Activated CD4-positive, alpha-beta memory T cell treated with anti-CD3 and anti-CD28 coated beads for 36 hours (primary cell): ENCODE measurements at regions of chr22 and their contacts with region 1.

Region 1: DNA sequence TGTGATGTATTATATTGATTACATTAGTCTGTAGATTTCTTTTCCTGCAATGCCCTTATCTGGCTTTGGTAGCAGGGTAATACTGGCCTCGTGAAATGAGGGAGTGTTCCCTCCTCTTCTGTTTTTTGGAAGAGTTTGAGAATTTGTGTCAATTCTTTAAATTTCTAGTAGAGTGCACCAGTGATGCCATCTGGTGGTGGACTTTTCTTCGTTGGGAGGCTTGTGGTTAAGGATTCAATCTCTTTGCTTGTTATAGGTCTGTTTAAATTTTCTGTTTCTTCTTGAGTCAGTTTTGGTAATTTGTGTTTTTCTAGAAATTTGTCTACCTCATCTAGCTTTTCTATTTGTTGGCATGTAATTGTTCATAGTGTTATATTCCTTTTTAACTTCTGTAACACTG is 18.9 kb downstream of the SHANK3 start:
- DNase-seq: peak; percentile 65
- H3K4me3 Mint-ChIP-seq: no peak overlapping the region
- H3K27ac Mint-ChIP-seq: no peak overlapping the region
- H3K4me1 Mint-ChIP-seq: peaks cover 7% of the 10 kb centered on the region
- H3K27me3 Mint-ChIP-seq: peaks cover 2% of the 10 kb centered on the region

Region 2: GRCh38 chr22:50576070-50576469 is 115.5 kb before region 1 on chr22:
- CTCF ChIA-PET with region 1: no interaction called
- POLR2A ChIA-PET with region 1: no interaction called
- intact Hi-C with region 1: loop called (anchors 1 kb)
- DNase-seq: peak; percentile 21
- H3K4me3 Mint-ChIP-seq: no peak overlapping the region
- H3K27ac Mint-ChIP-seq: no peak overlapping the region
- H3K4me1 Mint-ChIP-seq: peaks cover 13% of the 10 kb centered on the region
- H3K27me3 Mint-ChIP-seq: no peaks in the 10 kb centered on the region

Region 3: DNA sequence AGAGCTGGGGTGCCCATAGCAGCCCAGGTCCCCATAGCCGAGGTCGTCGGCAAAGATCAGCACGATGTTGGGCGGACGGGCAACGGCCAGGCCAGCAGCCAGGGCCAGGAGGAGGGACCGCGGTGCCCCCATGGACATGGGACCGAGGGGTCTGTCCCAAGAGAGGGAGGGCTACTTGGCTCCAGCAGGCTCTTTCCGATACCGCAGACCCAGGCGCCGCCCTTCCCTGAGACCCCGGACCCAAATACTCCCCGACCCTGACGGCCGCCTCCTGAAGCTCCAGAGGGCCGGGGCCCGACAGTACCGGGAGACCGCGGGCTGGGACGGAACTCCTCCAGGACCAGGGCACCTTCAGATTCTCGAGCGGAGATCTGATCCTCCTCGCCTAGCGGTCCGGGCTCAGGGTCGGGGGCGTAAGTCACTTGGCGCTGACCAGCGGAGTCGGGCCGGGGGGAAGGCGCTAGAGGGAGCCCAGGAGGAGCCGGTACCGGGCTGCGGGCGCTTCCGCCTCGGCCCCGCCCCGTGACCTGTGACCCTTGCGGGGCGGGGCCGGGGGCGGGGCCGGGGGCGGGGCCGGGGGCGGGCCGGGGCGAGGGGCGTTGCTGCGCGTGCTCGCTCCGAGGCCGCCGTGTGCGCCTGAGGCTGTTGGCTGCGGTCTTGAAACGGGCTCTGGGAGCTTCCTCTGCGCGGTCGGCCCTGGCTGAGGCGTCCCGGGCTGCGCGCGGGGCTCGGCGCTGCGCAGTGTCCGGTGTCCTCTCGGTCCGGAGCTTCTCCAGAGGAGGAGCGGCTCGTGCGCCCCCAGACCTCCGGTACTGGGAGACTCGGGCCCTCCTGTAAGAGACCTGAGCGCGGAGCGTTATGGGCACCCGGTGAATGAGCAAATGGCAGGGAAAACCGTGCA is 63.6 kb before region 1 on chr22 and contains the start of gene ARSA:
- CTCF ChIA-PET with region 1: interaction called, 4 read pairs
- POLR2A ChIA-PET with region 1: no interaction called
- intact Hi-C with region 1: loop called (anchors 1 kb)
- DNase-seq: peak; percentile 85
- H3K4me3 Mint-ChIP-seq: peak within 1 kb of the TSS; percentile 88
- H3K27ac Mint-ChIP-seq: peak within 1 kb of the TSS; percentile 69
- H3K4me1 Mint-ChIP-seq: peaks cover 21% of the 10 kb centered on the region
- H3K27me3 Mint-ChIP-seq: no peaks in the 10 kb centered on the region
- total RNA-seq, gene ARSA: 23.9 to 25.8 TPM

Region 4: DNA sequence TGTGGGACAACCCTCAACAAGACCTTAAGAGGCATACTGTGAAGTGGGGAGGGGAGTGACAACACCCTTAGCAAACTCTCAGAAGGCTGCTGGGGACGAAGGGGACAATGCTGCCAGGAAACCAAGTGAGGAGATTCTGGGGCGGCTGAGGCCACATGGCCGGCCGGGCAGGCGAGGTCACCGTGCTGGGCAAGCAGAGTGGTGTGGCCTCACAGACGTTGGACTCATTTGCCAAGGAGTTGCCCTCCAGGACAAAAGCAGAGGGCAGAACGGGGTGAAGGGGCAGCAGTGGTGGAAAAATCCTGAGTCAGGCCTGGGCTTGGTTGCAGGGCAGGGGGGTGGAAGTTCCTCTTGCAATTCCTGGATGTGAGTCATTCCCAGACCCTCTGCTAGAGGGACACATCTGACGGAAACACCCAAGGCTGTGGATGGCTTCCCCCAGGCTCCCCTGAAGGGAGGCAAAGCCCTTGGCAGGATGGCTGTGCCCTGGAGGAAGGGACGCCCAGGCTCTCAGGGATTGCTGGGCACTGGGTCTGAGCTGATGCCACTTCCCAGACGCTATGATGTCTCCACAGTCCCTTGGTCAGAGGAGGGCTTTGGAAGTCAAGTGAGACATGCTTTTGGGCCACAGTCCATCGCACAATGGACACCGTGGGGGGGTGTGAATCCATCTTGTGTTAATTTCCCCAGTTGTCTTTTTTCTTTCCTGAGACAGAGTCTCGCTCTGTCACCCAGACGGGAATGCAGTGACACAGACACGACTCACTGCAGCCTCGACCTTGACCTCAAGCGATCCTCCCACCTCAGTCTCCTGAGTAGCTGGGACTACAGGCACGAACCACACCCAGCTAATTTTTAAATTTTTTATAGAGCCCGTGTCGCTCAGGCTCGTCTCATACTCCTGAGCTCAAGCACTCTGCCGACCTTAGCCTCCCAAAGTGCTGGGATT is 35.1 kb before region 1 on chr22:
- CTCF ChIA-PET with region 1: no interaction called
- POLR2A ChIA-PET with region 1: no interaction called
- intact Hi-C with region 1: no loop called
- DNase-seq: no peak
- H3K4me3 Mint-ChIP-seq: no peak overlapping the region
- H3K27ac Mint-ChIP-seq: no peak overlapping the region
- H3K4me1 Mint-ChIP-seq: no peaks in the 10 kb centered on the region
- H3K27me3 Mint-ChIP-seq: peaks cover 24% of the 10 kb centered on the region

Region 5: GRCh38 chr22:50674606-50675549 is 16.6 kb before region 1 on chr22:
- CTCF ChIA-PET with region 1: no interaction called
- POLR2A ChIA-PET with region 1: no interaction called
- intact Hi-C with region 1: no loop called
- DNase-seq: no peak
- H3K4me3 Mint-ChIP-seq: peak overlapping the region; percentile 1
- H3K27ac Mint-ChIP-seq: no peak overlapping the region
- H3K4me1 Mint-ChIP-seq: peaks cover 11% of the 10 kb centered on the region
- H3K27me3 Mint-ChIP-seq: peaks cover 39% of the 10 kb centered on the region